SK-N-SH (cell line): ENCODE measurements at regions of chr3 and their contacts with region 1.

Region 1: GRCh38 chr3:119279101-119279554 is 15.1 kb upstream of the ARHGAP31 start:
- DNase-seq: no peak
- H3K4me3 ChIP-seq: no peak overlapping the region
- H3K27ac ChIP-seq: peak overlapping the region in 1 of 2 experiments; percentile 61; a peak in 1 of 4 replicates
- H3K4me1 ChIP-seq: peaks cover 0 to 19% of the 10 kb centered on the region in 2 experiments; a peak in 2 of 4 replicates
- H3K27me3 ChIP-seq: no peaks in the 10 kb centered on the region
- CTCF ChIP-seq: no peak
- EP300 ChIP-seq: no peak
- RAD21 ChIP-seq: no peak

Region 2: DNA sequence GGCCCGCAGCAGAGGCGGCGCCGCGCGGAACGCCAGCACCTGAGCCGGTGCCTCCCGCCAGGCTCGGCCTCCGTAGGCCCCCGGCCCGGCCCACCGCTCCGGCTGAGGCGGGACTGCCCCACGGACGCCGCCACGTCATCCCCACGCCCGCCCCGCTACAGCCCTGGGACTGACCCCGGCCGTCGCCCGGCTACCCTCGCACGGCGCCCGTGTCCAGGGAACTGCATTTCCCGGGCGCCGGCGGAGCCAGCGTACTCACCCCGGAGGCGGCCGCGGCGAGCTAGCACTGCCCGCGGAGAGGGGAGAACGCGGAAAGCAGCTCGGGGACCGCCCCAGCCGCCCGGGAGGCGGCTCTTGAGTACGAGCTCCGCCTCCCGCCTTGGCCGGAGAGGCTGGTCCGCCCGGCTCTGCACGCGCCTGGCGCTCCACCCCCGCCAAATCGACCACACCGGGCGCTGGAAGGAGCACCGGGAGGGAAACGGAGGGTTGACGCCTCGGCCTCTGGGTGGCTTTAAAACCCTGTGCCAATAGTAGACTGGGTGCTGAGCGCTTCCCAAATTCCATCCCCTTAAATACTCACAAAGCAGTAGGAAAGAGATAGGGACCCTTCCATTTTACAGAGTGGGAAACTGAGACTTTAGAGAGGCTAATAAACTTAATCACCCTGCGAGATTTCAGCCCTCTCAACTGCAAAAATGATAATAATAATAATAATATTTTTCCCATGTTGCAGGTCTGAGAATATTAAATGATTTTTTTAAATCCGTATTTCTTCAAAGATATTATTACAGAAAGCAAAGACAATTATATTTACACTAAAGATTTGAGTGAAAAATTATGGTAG is 38.3 kb before region 1 on chr3 and contains the start of gene B4GALT4:
- CTCF ChIA-PET with region 1: interaction called, 11 read pairs
- POLR2A ChIA-PET with region 1: no interaction called
- DNase-seq: peak; percentile 94
- H3K4me3 ChIP-seq: peak within 1 kb of the TSS; percentile 73 to 83
- H3K27ac ChIP-seq: peak within 1 kb of the TSS; percentile 79 to 89
- H3K4me1 ChIP-seq: peaks cover 1 to 4% of the 10 kb centered on the region in 2 experiments; a peak in 3 of 4 replicates
- H3K27me3 ChIP-seq: no peaks in the 10 kb centered on the region
- CTCF ChIP-seq: no peak
- EP300 ChIP-seq: no peak
- RAD21 ChIP-seq: no peak
- polyA plus RNA-seq, gene B4GALT4: 15.7 and 19.8 TPM in 2 replicates

Region 3: GRCh38 chr3:119293871-119294695 is 15.0 kb after region 1 on chr3 and contains the start of gene ARHGAP31:
- CTCF ChIA-PET with region 1: interaction called, 20 read pairs
- POLR2A ChIA-PET with region 1: no interaction called
- DNase-seq: peak; percentile 79
- H3K4me3 ChIP-seq: peak within 1 kb of the TSS; percentile 81 to 90
- H3K27ac ChIP-seq: peak within 1 kb of the TSS; percentile 90 to 91
- H3K4me1 ChIP-seq: peaks cover 12 to 48% of the 10 kb centered on the region in 2 experiments; a peak in 3 of 4 replicates
- H3K27me3 ChIP-seq: no peaks in the 10 kb centered on the region
- CTCF ChIP-seq: no peak
- EP300 ChIP-seq: no peak
- RAD21 ChIP-seq: no peak
- polyA plus RNA-seq, gene ARHGAP31: 4.4 and 7.7 TPM in 2 replicates

Region 4: GRCh38 chr3:119352849-119353502 is 73.8 kb after region 1 on chr3:
- CTCF ChIA-PET with region 1: interaction called, 33 read pairs
- POLR2A ChIA-PET with region 1: no interaction called
- DNase-seq: no peak
- H3K4me3 ChIP-seq: no peak overlapping the region
- H3K27ac ChIP-seq: peak overlapping the region; percentile 7 to 47; a peak in 3 of 4 replicates
- H3K4me1 ChIP-seq: peaks cover 9 to 28% of the 10 kb centered on the region in 2 experiments; a peak in 3 of 4 replicates
- H3K27me3 ChIP-seq: no peaks in the 10 kb centered on the region
- CTCF ChIP-seq: peak; percentile 47
- EP300 ChIP-seq: no peak
- RAD21 ChIP-seq: peak; percentile 66

Region 5: GRCh38 chr3:119463171-119464169 is 184.3 kb after region 1 on chr3 and contains the start of gene TMEM39A:
- CTCF ChIA-PET with region 1: interaction called, 11 read pairs
- POLR2A ChIA-PET with region 1: no interaction called
- DNase-seq: peak; percentile 98
- H3K4me3 ChIP-seq: peak within 1 kb of the TSS; percentile 99 to 100
- H3K27ac ChIP-seq: peak within 1 kb of the TSS; percentile 90 to 96
- H3K4me1 ChIP-seq: peaks cover 11 to 15% of the 10 kb centered on the region in 2 experiments
- H3K27me3 ChIP-seq: no peaks in the 10 kb centered on the region
- CTCF ChIP-seq: no peak
- EP300 ChIP-seq: no peak
- RAD21 ChIP-seq: no peak; the same call in 1 of the 2 replicates
- polyA plus RNA-seq, gene TMEM39A: 13.2 and 19.0 TPM in 2 replicates